OCI-LY7 (cell line): ENCODE measurements at regions of chr3 and their contacts with region 1.

Region 1: DNA sequence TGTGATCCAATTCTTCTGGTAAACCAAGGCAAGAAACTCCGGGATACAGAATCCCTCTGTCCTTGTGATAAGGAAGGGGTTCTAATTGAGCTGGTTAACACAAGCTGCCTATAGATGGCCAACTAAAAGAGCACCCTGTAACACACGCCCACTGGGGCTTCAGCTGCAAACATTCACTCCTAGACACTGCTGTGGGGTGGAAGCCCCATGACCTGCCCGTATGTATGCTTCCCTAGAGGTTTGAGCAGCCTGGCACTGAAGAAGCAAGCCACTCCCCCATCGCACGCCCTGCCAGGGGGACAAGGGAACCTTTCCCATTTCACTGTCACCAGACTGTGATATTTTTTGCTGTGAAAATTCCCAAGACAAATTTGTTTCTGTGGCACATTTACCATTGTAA is 516.9 kb upstream of the GOLIM4 start:
- DNase-seq: no peak
- H3K4me3 ChIP-seq: no peak overlapping the region
- H3K27ac ChIP-seq: no peak overlapping the region
- H3K4me1 ChIP-seq: no peaks in the 10 kb centered on the region
- CTCF ChIP-seq: no peak

Region 2: DNA sequence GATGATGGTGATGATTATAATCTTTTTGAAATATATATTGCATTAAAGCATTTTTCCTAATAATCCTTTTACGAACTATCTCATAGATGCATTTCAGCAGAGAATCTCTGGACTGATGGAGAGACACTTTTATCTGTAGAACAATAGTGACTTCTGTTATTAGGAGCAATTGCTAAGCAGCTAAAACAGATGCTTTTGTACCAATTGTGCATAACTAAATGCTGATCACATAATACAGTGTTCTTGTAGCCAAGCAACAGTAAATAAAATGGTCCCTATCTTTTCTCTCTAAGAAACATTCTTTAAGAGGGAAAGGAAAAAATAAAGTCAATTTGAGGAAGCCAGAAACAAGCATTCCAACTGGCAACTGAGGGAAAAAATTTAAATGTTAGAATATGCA is 111.1 kb before region 1 on chr3:
- CTCF ChIA-PET with region 1: no interaction called
- POLR2A ChIA-PET with region 1: interaction called, 10 read pairs
- intact Hi-C with region 1: no loop called
- DNase-seq: no peak
- H3K4me3 ChIP-seq: no peak overlapping the region
- H3K27ac ChIP-seq: no peak overlapping the region
- H3K4me1 ChIP-seq: no peaks in the 10 kb centered on the region
- CTCF ChIP-seq: no peak

Region 3: GRCh38 chr3:168596175-168596823 is 16.4 kb before region 1 on chr3:
- CTCF ChIA-PET with region 1: no interaction called
- POLR2A ChIA-PET with region 1: no interaction called
- intact Hi-C with region 1: no loop called
- DNase-seq: no peak
- H3K4me3 ChIP-seq: no peak overlapping the region
- H3K27ac ChIP-seq: no peak overlapping the region
- H3K4me1 ChIP-seq: no peaks in the 10 kb centered on the region
- CTCF ChIP-seq: no peak